ENCODE measurements at regions of chr15 and their contacts with region 1.

Region 1: GRCh38 chr15:94381384-94381783 is 150.0 kb downstream of the MCTP2 start:
- DNase-seq: no peak
- ATAC-seq: peak in 2 of 3 donors; percentile 42 to 47
- H3K4me3 ChIP-seq: no peak overlapping the region
- H3K4me3 Mint-ChIP-seq: peak overlapping the region; percentile 46
- H3K27ac ChIP-seq: no peak overlapping the region
- H3K27ac Mint-ChIP-seq: peak overlapping the region; percentile 46 to 67
- H3K4me1 ChIP-seq: peaks cover 22% of the 10 kb centered on the region
- H3K4me1 Mint-ChIP-seq: peaks cover 53 to 62% of the 10 kb centered on the region in 2 donors
- H3K27me3 ChIP-seq: no peaks in the 10 kb centered on the region
- H3K27me3 Mint-ChIP-seq: no peaks in the 10 kb centered on the region
- CTCF ChIP-seq: no peak

Region 2: DNA sequence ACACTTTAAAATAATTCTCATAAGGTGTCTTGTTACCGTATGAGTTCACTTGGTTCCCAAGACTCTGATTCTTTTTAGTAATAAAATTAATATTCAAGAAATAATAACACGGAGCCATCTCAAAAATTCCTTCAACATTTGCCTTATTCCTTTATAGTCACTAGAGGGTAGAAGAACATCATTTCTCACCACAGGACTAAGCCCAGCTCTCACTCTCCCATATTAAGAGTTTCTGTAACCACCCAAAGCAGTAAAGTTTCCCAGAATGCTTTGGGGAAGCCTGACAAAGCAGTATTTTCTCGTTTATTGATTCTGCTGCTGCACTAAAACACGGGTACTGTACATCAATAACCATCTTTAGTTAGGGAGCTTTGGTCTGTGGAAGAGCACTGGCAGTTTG is 35.1 kb before region 1 on chr15:
- intact Hi-C with region 1: loop called (anchors 2 kb)
- DNase-seq: no peak
- ATAC-seq: no peak
- H3K4me3 ChIP-seq: no peak overlapping the region
- H3K4me3 Mint-ChIP-seq: no peak overlapping the region
- H3K27ac ChIP-seq: no peak overlapping the region
- H3K27ac Mint-ChIP-seq: peak overlapping the region; percentile 5 to 59
- H3K4me1 ChIP-seq: no peaks in the 10 kb centered on the region
- H3K4me1 Mint-ChIP-seq: peaks cover 31 to 34% of the 10 kb centered on the region in 2 donors
- H3K27me3 ChIP-seq: no peaks in the 10 kb centered on the region
- H3K27me3 Mint-ChIP-seq: no peaks in the 10 kb centered on the region
- CTCF ChIP-seq: no peak

Measured in natural killer cell (primary cell).